ENCODE measurements at regions of chr1 and their contacts with region 1.

Region 1: GRCh38 chr1:224513787-224514209 is 79.2 kb upstream of the WDR26 start:
- DNase-seq: peak; percentile 76
- ATAC-seq: peak; percentile 76
- H3K4me3 ChIP-seq: no peak overlapping the region
- H3K4me3 Mint-ChIP-seq: no peak overlapping the region
- H3K27ac ChIP-seq: no peak overlapping the region
- H3K27ac Mint-ChIP-seq: no peak overlapping the region
- H3K4me1 ChIP-seq: peaks cover 0 to 3% of the 10 kb centered on the region in 2 donors
- H3K4me1 Mint-ChIP-seq: peaks cover 6% of the 10 kb centered on the region
- H3K27me3 ChIP-seq: no peaks in the 10 kb centered on the region
- H3K27me3 Mint-ChIP-seq: no peaks in the 10 kb centered on the region
- CTCF ChIP-seq: peak; percentile 91

Region 2: DNA sequence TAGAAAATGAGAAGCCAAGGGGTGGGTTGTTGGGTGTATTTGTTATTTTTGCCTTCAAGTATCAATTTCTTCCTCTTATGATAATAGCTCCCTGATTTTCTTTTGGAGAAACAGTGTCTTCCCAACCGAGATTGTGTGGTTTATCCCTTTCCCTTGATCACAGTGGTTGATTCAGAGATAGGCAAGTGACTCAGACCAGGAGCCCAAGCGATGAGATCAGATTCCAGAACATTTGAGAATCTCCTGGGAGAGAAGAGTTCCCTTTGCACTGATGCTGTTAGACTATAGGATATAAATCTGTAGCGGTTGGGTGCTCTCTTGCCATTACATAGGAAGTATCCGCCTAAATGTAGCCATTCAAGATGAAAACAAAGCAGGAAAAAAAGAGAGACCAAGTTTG is 10.9 kb after region 1 on chr1:
- CTCF ChIA-PET with region 1: interaction called, 18 read pairs
- POLR2A ChIA-PET with region 1: no interaction called
- intact Hi-C with region 1: no loop called
- DNase-seq: no peak
- ATAC-seq: no peak
- H3K4me3 ChIP-seq: no peak overlapping the region
- H3K4me3 Mint-ChIP-seq: no peak overlapping the region
- H3K27ac ChIP-seq: no peak overlapping the region
- H3K27ac Mint-ChIP-seq: no peak overlapping the region
- H3K4me1 ChIP-seq: no peaks in the 10 kb centered on the region
- H3K4me1 Mint-ChIP-seq: no peaks in the 10 kb centered on the region
- H3K27me3 ChIP-seq: no peaks in the 10 kb centered on the region
- H3K27me3 Mint-ChIP-seq: peaks cover 6% of the 10 kb centered on the region
- CTCF ChIP-seq: no peak

Region 3: GRCh38 chr1:224922404-224923164 is 408.8 kb after region 1 on chr1:
- CTCF ChIA-PET with region 1: interaction called, 5 read pairs
- POLR2A ChIA-PET with region 1: no interaction called
- intact Hi-C with region 1: loop called (anchors 5 kb)
- DNase-seq: peak; percentile 6
- ATAC-seq: no peak
- H3K4me3 ChIP-seq: no peak overlapping the region
- H3K4me3 Mint-ChIP-seq: no peak overlapping the region
- H3K27ac ChIP-seq: no peak overlapping the region
- H3K27ac Mint-ChIP-seq: no peak overlapping the region
- H3K4me1 ChIP-seq: no peaks in the 10 kb centered on the region
- H3K4me1 Mint-ChIP-seq: no peaks in the 10 kb centered on the region
- H3K27me3 ChIP-seq: no peaks in the 10 kb centered on the region
- H3K27me3 Mint-ChIP-seq: peaks cover 20% of the 10 kb centered on the region
- CTCF ChIP-seq: peak; percentile 45

Region 4: GRCh38 chr1:225343624-225344023 is 829.8 kb after region 1 on chr1:
- CTCF ChIA-PET with region 1: interaction called, 3 read pairs
- POLR2A ChIA-PET with region 1: no interaction called
- intact Hi-C with region 1: loop called (anchors 10 kb)
- DNase-seq: peak; percentile 12
- ATAC-seq: no peak
- H3K4me3 ChIP-seq: no peak overlapping the region
- H3K4me3 Mint-ChIP-seq: no peak overlapping the region
- H3K27ac ChIP-seq: no peak overlapping the region
- H3K27ac Mint-ChIP-seq: no peak overlapping the region
- H3K4me1 ChIP-seq: no peaks in the 10 kb centered on the region
- H3K4me1 Mint-ChIP-seq: no peaks in the 10 kb centered on the region
- H3K27me3 ChIP-seq: peaks cover 0 to 7% (median 0%) of the 10 kb centered on the region in 4 experiments
- H3K27me3 Mint-ChIP-seq: peaks cover 37% of the 10 kb centered on the region
- CTCF ChIP-seq: no peak